ENCODE measurements at regions of chr10 and their contacts with region 1.

Region 1: GRCh38 chr10:132387764-132388210 is 9.2 kb upstream of the PWWP2B start:
- DNase-seq: peak; percentile 70 to 80 (median 76)
- H3K4me3 ChIP-seq: no peak overlapping the region
- H3K4me3 Mint-ChIP-seq: peak overlapping the region in 6 of 8 donors; percentile 28 to 69 (median 52)
- H3K27ac ChIP-seq: no peak overlapping the region
- H3K27ac Mint-ChIP-seq: peak overlapping the region; percentile 61 to 93 (median 72)
- H3K4me1 ChIP-seq: peaks cover 7% of the 10 kb centered on the region
- H3K4me1 Mint-ChIP-seq: peaks cover 6 to 17% (median 8%) of the 10 kb centered on the region in 4 donors
- H3K27me3 ChIP-seq: no peaks in the 10 kb centered on the region
- H3K27me3 Mint-ChIP-seq: no peaks in the 10 kb centered on the region

Region 2: GRCh38 chr10:132446661-132447194 is 58.9 kb after region 1 on chr10:
- CTCF ChIA-PET with region 1: interaction called, 18 read pairs
- POLR2A ChIA-PET with region 1: interaction called, 10 read pairs
- intact Hi-C with region 1: loop called (anchors 1 kb)
- DNase-seq: peak; percentile 67 to 75 (median 69)
- H3K4me3 ChIP-seq: peak overlapping the region in 1 of 2 donors; percentile 51
- H3K4me3 Mint-ChIP-seq: peak overlapping the region; percentile 58 to 87 (median 72)
- H3K27ac ChIP-seq: peak overlapping the region; percentile 84
- H3K27ac Mint-ChIP-seq: peak overlapping the region; percentile 87 to 100 (median 98)
- H3K4me1 ChIP-seq: peaks cover 57% of the 10 kb centered on the region
- H3K4me1 Mint-ChIP-seq: peaks cover 18 to 60% (median 33%) of the 10 kb centered on the region in 4 donors
- H3K27me3 ChIP-seq: no peaks in the 10 kb centered on the region
- H3K27me3 Mint-ChIP-seq: no peaks in the 10 kb centered on the region

Region 3: GRCh38 chr10:132452631-132453469 is 65.1 kb after region 1 on chr10:
- CTCF ChIA-PET with region 1: interaction called, 21 read pairs
- POLR2A ChIA-PET with region 1: interaction called, 10 read pairs
- intact Hi-C with region 1: loop called (anchors 1 kb)
- DNase-seq: peak; percentile 91 to 92 (median 91)
- H3K4me3 ChIP-seq: peak overlapping the region in 1 of 2 donors; percentile 32
- H3K4me3 Mint-ChIP-seq: peak overlapping the region in 6 of 8 donors; percentile 45 to 79 (median 56)
- H3K27ac ChIP-seq: peak overlapping the region; percentile 86
- H3K27ac Mint-ChIP-seq: peak overlapping the region; percentile 83 to 98 (median 95)
- H3K4me1 ChIP-seq: peaks cover 31% of the 10 kb centered on the region
- H3K4me1 Mint-ChIP-seq: peaks cover 6 to 37% (median 15%) of the 10 kb centered on the region in 4 donors
- H3K27me3 ChIP-seq: no peaks in the 10 kb centered on the region
- H3K27me3 Mint-ChIP-seq: no peaks in the 10 kb centered on the region

Region 4: GRCh38 chr10:132637477-132638129 is 249.8 kb after region 1 on chr10:
- CTCF ChIA-PET with region 1: interaction called, 3 read pairs
- POLR2A ChIA-PET with region 1: no interaction called
- intact Hi-C with region 1: loop called (anchors 1 kb)
- DNase-seq: peak in 4 of 5 donors; percentile 43 to 55 (median 49)
- H3K4me3 ChIP-seq: no peak overlapping the region
- H3K4me3 Mint-ChIP-seq: peak overlapping the region in 3 of 8 donors; percentile 40 to 53 (median 52)
- H3K27ac ChIP-seq: no peak overlapping the region
- H3K27ac Mint-ChIP-seq: peak overlapping the region in 5 of 7 donors; percentile 7 to 50 (median 39)
- H3K4me1 ChIP-seq: peaks cover 8% of the 10 kb centered on the region
- H3K4me1 Mint-ChIP-seq: peaks cover 17 to 28% (median 20%) of the 10 kb centered on the region in 4 donors
- H3K27me3 ChIP-seq: no peaks in the 10 kb centered on the region
- H3K27me3 Mint-ChIP-seq: no peaks in the 10 kb centered on the region